ENCODE measurements at regions of chr20 and their contacts with region 1.

Region 1: DNA sequence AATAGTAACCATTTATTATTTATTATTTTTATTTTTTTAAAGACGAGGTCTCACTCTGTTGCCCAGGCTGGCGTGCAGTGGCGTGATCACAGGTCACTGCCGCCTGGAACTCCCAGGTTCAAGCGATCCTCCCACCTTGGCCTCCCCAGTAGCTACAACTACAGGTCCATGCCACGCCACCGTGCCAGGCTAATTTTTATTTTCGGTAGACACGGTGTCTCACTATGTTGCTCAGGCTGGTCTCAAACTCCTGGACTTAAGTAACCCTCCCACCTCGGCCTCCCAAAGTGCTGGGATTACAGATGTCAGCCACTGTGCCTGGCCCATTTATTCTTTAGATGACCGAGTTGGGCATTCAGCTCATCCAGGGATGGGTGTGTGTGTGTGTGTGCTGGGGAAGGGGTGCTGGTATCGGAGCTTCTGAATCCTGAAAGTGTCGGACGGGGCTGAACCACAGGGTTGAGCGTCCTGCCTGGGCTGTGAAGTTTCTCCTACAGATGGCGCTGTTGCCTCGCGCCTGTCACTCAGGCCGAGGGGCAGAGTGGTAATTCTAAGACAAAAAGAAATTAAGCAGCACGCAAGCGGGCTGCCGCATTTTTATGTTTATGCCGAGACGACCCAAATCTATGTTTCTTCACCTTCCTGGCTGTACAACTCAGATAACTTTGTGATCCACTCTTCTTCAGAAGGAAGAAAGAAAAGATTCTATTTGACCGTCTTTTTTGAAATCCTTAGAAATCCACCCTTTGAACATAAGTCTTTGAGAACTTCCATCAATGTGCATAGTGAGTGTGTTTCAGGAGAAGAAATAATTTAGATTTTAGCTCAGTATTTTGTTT is 252.8 kb downstream of the CDH26 start:
- DNase-seq: peak; percentile 4
- H3K4me3 ChIP-seq: no peak overlapping the region
- CTCF ChIP-seq: peak; percentile 95

Region 2: GRCh38 chr20:59891581-59891980 is 319.4 kb before region 1 on chr20:
- CTCF ChIA-PET with region 1: no interaction called
- POLR2A ChIA-PET with region 1: no interaction called
- DNase-seq: no peak
- H3K4me3 ChIP-seq: no peak overlapping the region
- CTCF ChIP-seq: no peak

Region 3: DNA sequence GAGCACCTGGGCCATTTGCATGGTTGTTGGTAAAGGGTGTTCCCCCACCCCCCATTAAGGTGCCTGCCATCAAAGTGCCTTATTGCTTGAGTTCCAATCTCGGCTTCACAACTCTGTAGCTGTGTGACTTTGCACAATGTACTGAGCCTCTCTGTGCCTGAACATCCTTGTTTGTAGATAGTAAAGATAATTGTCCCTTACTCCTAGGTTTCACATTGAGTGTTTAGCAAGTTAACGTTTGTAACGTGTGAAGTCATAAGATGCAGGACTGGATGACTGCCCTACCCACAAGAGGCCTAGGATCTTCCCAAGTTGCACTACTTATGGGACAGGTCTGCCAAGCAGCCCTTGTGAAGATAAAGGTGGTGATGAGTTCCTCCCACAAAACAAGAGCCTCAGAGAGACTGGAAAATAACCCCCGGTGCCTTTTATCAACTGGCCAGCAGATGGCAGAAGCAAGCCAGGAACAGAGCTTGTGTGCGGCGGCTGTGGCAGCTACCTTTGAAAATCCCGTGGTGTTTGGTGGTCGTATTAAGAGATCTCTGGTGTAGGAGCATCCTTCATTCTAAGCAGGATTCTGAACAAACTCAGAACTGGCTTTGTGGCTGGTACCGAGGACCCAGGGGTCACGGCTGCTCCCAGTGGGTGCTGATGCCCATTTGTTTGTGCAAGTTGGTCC is 153.7 kb before region 1 on chr20:
- CTCF ChIA-PET with region 1: interaction called, 94 read pairs
- POLR2A ChIA-PET with region 1: no interaction called
- DNase-seq: no peak
- H3K4me3 ChIP-seq: no peak overlapping the region
- CTCF ChIP-seq: peak; percentile 75

Region 4: GRCh38 chr20:60224914-60225313 is 13.9 kb after region 1 on chr20:
- CTCF ChIA-PET with region 1: interaction called, 24 read pairs
- POLR2A ChIA-PET with region 1: no interaction called
- DNase-seq: no peak
- H3K4me3 ChIP-seq: no peak overlapping the region
- CTCF ChIP-seq: peak; percentile 47

Region 5: DNA sequence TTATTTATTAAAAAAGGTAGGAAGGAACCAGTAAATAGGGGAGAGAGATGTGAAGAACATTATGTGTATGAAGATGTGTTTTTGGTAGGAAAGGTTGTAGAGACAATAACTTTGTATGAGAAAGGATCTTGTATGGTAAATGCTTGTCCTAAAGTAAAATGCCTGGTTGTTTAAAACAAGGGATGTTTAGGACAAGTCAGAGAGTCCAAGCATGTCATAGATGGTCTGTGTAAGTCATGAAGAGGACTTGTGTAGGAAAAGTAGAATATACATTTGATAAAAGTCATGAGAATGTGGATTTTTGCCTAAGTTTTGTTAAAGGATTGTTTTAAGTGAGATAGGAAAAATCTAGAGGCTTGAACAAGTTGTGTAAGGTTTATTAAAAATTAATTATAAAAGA is 72.3 kb after region 1 on chr20:
- CTCF ChIA-PET with region 1: no interaction called
- POLR2A ChIA-PET with region 1: no interaction called
- DNase-seq: no peak
- H3K4me3 ChIP-seq: no peak overlapping the region
- CTCF ChIP-seq: no peak

Region 6: GRCh38 chr20:61161726-61162390 is 950.9 kb after region 1 on chr20:
- CTCF ChIA-PET with region 1: interaction called, 12 read pairs
- POLR2A ChIA-PET with region 1: no interaction called
- DNase-seq: no peak
- H3K4me3 ChIP-seq: no peak overlapping the region
- CTCF ChIP-seq: no peak

Region 7: GRCh38 chr20:61253264-61253639 is 1042.3 kb after region 1 on chr20:
- CTCF ChIA-PET with region 1: interaction called, 12 read pairs
- POLR2A ChIA-PET with region 1: no interaction called
- DNase-seq: no peak
- H3K4me3 ChIP-seq: peak overlapping the region; percentile 53
- CTCF ChIP-seq: peak; percentile 59